ENCODE measurements at regions of chr1 and their contacts with region 1.

Region 1: DNA sequence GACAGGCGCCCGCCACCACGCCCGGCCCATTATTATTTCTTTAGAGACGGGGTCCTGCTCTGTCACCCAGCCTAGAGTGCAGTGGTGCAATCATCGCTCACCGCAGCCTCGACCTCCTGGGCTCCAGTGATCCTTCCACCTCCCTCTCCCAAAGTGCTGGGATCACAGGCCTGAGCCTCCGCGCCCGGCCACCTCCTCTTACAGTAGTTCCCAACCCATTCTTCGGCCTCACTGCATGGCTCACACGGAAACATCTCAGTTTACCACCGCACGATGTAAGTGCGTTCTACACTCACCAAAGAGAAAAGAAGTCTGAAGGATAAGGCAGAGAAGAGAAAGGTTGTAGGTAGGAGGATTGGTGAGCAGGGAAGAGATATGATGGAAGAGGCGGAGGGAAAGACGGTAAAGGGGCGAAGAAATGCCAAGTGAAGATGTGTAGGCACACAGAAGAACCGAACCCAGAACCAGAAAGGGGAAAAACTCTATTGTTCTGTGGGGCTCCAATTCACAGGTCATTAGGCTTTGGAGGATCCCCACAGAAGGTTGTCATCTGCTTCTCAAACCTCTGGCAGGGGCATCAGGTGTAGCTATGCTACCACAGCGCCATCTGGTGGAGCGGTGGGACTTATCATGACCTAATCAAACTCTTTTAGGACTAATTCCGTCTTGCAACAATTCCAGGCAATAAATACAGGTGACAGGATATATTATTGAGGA is 504.2 kb downstream of the SMYD3 start:
- DNase-seq: peak; percentile 89

Region 2: DNA sequence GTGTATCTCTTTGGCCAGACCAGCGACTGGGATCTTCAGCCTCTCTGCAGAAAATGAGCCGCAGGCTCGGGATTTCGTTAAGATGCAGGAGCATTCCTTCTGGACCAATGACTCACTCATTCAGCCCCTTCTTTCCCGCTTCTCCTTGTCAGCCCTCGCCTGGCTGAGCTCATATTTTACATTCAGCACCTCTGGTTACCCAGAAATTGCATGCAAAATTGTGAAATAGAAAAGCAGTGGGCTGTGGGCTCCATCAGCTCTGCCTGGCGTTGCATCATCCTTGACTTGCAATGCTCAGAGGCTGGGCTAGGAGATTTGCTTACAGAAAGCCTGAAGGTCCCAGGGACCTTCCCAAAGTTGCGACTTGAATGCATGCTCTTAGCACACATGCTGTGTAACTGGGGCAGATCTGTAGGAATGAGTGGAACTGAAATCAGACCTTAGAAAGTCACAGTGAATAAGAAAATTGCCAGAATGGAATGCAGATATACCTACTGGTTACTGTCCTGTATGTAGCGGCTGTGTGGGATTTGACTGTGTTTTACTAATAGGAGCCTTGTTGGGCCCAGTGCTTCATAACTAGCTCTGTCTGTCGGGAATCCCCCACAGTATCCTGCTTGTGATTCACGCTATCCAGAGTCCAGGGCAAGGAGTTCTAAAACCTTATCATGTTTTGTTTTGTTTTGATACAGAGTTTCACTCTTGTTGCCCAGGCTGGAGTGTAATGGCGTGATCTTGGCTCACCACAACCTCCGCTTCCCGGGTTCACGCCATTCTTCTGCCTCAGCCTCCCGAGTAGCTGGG is 403.3 kb before region 1 on chr1:
- intact Hi-C with region 1: loop called (anchors 5 kb)
- DNase-seq: no peak

Region 3: GRCh38 chr1:245827301-245827700 is 175.6 kb before region 1 on chr1:
- intact Hi-C with region 1: loop called (anchors 2 kb)
- DNase-seq: no peak

Region 4: DNA sequence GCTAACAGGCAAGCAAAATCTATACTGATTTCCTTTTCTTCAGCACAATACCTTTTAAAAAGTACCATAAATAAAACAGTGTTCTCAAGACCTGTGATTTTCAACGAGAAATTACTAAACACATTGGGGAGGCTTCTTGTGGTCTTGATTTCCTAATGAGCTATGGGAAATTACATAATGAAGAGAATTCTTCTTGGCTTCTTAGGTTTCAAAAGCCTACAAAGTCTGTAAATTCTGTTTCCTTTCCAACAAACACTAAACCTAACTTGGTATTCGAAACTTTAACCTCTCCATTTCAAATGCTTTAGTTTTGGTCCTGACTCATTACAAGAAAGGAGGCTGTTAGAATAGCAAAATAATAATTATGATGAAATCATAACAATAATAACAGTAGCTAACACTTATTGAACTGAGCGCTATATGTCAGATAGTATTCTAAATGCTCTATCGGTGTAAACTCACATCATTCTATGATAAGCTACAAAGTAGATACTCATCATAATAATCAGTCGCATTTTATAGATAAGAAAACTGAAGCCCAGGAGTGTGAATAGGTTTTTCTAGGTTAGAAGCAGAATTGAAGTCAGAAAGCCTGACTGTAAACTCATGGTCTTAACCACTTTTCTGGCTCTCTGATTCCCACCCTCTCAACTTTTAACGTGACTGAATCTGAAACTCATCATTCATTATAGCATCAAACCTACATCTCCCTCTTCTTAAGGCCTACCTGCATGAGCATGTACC is 17.5 kb after region 1 on chr1:
- intact Hi-C with region 1: no loop called
- DNase-seq: no peak

Region 5: DNA sequence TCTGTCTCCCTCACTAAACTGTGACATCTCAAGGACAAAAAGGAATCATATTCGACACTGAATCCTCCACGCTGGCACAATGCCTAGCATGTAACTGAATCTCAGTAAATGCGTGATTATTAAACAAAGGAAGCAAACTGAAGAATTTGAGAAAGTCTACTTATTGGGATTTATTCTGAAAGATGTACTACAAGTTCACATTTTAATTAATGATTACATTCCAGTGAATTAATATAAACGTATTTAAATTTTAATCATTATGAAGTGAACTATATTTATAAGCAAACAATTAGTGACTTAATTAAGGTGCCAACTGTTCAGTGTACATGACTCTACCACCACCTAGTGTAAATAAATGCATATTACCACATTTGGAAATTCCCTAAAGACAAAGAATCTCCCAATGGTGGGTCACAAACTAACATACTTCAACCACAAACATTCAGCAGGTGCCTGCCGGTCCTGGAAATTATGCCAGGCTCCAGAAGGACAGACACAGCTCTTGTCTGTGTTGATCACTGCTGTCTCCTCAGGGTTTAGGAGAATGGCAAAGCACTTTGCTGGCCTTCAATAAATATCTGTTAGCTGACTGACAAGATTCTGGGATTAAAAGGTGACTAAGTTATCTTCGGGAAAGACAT is 447.8 kb after region 1 on chr1:
- intact Hi-C with region 1: loop called (anchors 5 kb)
- DNase-seq: no peak